Right ventricle myocardium superior (tissue), 1 donor: ENCODE measurements at regions of chr13 and their contacts with region 1.

Region 1: GRCh38 chr13:37097076-37097475 is 8.4 kb downstream of the CSNK1A1L start:
- DNase-seq: no peak
- ATAC-seq: no peak

Region 2: GRCh38 chr13:37277435-37278144 is 180.5 kb after region 1 on chr13:
- intact Hi-C with region 1: no loop called
- DNase-seq: no peak
- ATAC-seq: no peak

Region 3: GRCh38 chr13:37608750-37609339 is 511.8 kb after region 1 on chr13:
- intact Hi-C with region 1: loop called (anchors 5 kb)
- DNase-seq: no peak
- ATAC-seq: no peak